Naive thymus-derived CD8-positive, alpha-beta T cell (primary cell): ENCODE measurements at regions of chr3 and their contacts with region 1.

Region 1: DNA sequence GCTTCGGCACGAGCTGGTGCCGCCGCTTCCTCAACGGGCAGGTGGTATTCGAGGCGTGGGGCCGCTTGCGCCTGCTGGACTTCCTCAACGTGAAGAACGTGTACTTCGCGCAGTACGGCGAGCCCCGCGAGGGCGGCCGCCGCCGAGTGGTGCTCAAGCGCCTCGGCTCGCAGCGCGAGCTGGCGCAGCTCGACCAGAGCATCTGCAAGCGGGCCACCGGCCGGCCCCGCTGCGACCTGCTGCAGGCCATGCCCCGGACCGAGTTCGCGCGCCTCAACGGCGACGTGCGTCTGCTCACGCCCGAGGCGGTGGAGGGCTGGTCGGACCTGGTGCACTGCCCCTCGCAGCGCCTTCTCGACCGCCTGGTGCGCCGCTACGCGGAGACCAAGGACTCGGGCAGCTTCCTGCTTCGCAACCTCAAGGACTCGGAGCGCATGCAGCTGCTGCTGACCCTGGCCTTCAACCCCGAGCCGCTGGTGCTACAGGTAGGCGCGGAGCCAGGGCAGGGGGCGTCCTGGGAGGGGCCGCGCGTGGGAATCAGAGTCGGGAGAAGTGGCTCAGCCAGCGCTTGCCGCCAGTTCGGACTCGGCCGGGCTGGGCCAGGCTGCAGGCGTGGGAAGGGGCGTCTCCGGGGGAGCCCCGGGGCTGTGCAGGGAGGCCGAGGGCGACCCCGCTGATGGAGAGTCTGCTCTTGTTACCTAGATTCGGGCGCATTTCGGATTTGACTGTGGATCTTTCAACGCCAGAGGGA is 1.1 kb downstream of the DIPK2A start:
- DNase-seq: peak; percentile 14 to 78 (median 50)
- ATAC-seq: peak; percentile 8 to 15
- H3K4me3 Mint-ChIP-seq: peak overlapping the region; percentile 89 to 99 (median 98)
- H3K27ac Mint-ChIP-seq: peak overlapping the region; percentile 92 to 98 (median 96)
- H3K4me1 Mint-ChIP-seq: peaks cover 15 to 52% (median 32%) of the 10 kb centered on the region in 4 donors
- H3K27me3 Mint-ChIP-seq: peaks cover 0 to 4% (median 0%) of the 10 kb centered on the region in 5 donors

Region 2: DNA sequence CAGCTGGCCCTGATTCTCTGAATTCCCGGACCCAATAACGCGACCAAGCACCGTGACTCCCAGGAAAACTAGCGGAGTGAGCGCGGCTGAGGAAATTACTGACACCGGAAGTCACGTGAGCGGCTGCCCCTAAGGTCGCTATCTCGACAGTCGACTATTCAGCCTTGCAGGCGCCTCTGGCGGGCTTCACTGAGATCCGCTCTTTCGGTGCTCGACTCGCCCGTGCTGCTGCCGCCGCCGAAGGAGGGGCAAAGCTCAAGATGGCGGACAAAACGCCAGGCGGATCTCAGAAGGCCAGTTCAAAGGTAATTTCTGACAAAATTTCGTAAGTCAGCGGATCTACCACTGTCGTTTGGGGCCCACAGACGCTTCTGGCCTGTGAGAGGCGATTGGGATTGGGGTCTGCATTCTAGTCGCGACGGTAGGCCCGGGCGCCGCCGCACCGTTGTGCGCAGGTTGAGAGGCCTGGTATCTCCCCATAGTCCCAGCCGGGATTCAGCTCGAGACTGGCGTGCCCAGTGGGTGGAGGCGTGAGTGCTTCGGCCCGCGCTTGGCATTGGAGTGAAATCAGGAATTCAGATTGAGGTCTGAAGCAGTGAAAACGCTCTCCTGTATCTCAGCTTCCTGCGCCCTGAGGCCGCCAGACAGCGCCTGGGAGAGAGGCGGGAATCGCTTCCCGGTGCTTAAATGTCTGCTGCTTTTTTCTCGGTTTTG is 971.2 kb before region 1 on chr3 and contains the start of gene U2SURP:
- POLR2A ChIA-PET with region 1: interaction called, 22 read pairs
- DNase-seq: peak; percentile 81 to 95 (median 90)
- ATAC-seq: peak; percentile 92 to 94
- H3K4me3 Mint-ChIP-seq: peak within 1 kb of the TSS; percentile 94 to 100 (median 99)
- H3K27ac Mint-ChIP-seq: peak within 1 kb of the TSS; percentile 97 to 100 (median 100)
- H3K4me1 Mint-ChIP-seq: peaks cover 19 to 51% (median 40%) of the 10 kb centered on the region in 4 donors
- H3K27me3 Mint-ChIP-seq: peaks cover 0 to 2% (median 0%) of the 10 kb centered on the region in 5 donors
- polyA plus RNA-seq, gene U2SURP: 110 to 131 (median 125) TPM

Region 3: DNA sequence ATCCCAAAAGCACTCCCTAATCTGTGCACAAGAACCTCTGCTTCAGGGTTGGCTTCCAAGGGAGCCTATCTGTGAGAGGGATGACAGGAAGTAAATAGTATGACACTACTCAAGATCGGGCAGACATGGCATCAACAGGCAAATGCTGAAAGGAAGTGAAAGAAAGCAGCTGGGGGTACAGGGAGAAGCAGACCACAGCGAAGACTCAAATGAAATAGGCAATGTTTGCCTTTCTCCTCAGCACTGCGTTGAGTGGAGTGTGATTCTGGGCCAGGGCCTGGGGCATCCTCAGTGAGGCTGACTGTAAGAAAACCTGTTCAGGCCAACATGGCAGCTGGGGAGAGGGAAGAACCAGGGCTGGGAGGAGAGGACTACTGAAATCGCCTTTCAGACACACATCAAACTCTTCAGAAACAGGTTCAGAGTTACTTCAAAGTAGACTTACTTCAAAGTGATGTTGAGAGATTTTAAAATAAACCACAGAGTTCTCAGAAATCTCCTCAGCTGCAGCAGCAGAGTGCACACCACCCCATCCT is 221.0 kb before region 1 on chr3:
- POLR2A ChIA-PET with region 1: interaction called, 20 read pairs
- DNase-seq: peak in 8 of 10 donors; percentile 13 to 80 (median 56)
- ATAC-seq: peak; percentile 81 to 84
- H3K4me3 Mint-ChIP-seq: peak overlapping the region; percentile 49 to 92 (median 69)
- H3K27ac Mint-ChIP-seq: peak overlapping the region; percentile 91 to 99 (median 96)
- H3K4me1 Mint-ChIP-seq: peaks cover 26 to 52% (median 41%) of the 10 kb centered on the region in 4 donors
- H3K27me3 Mint-ChIP-seq: no peaks in the 10 kb centered on the region

Region 4: DNA sequence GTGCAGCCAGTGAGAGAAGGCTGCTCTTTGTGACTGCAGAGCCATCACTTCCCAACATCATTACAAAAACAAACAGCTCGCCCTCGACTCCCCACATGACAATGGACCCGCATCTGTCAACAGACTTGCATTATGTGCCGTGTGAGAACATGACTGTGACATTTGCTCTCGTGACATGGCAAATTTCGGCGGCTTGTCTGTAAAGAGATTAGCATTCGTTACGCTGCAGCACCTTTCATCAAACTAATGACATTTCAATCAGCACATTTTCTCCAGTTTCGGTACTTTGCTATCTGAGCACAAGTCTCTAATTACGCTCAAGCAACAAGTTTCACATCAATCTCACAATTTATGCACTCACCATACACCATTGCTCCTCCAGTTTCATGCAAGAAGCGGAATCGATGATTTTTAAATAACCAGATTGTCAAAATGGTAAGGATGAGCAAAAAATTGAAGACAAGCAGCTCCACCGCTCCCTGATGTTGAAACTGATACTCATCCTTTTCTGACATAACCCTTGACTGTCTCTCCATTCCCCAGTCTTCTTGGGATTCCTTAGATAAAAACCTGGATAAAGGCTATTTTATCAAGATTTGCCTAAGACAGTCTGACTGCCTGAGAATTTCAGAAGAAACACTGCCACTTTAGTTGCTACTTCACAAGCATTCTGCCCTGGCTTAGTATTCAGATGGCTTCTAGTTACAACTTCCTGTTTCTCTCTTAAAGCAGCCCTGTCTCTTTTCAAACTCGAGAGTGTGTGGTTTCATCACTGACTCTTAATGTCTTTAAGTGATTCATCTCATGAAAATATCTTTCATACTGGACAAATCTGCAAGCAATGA is 124.7 kb before region 1 on chr3 and contains the start of gene SLC9A9:
- POLR2A ChIA-PET with region 1: interaction called, 19 read pairs
- DNase-seq: peak in 7 of 10 donors; percentile 10 to 44 (median 21)
- ATAC-seq: peak; percentile 90 to 98
- H3K4me3 Mint-ChIP-seq: peak within 1 kb of the TSS; percentile 88 to 100 (median 98)
- H3K27ac Mint-ChIP-seq: peak within 1 kb of the TSS; percentile 79 to 95 (median 94)
- H3K4me1 Mint-ChIP-seq: peaks cover 10 to 54% (median 41%) of the 10 kb centered on the region in 4 donors
- H3K27me3 Mint-ChIP-seq: no peaks in the 10 kb centered on the region
- polyA plus RNA-seq, gene SLC9A9: 14.2 to 19.4 (median 17.3) TPM

Region 5: GRCh38 chr3:143895805-143896204 is 76.9 kb before region 1 on chr3:
- POLR2A ChIA-PET with region 1: no interaction called
- DNase-seq: peak in 1 of 10 donors; percentile 4
- ATAC-seq: no peak
- H3K4me3 Mint-ChIP-seq: no peak overlapping the region
- H3K27ac Mint-ChIP-seq: no peak overlapping the region
- H3K4me1 Mint-ChIP-seq: no peaks in the 10 kb centered on the region
- H3K27me3 Mint-ChIP-seq: peaks cover 9 to 23% (median 11%) of the 10 kb centered on the region in 5 donors

Region 6: GRCh38 chr3:143910756-143911155 is 61.9 kb before region 1 on chr3:
- POLR2A ChIA-PET with region 1: no interaction called
- DNase-seq: no peak
- ATAC-seq: no peak
- H3K4me3 Mint-ChIP-seq: no peak overlapping the region
- H3K27ac Mint-ChIP-seq: no peak overlapping the region
- H3K4me1 Mint-ChIP-seq: no peaks in the 10 kb centered on the region
- H3K27me3 Mint-ChIP-seq: peaks cover 9 to 46% (median 20%) of the 10 kb centered on the region in 5 donors